H1 (cell line): ENCODE measurements at regions of chr16 and their contacts with region 1.

Region 1: DNA sequence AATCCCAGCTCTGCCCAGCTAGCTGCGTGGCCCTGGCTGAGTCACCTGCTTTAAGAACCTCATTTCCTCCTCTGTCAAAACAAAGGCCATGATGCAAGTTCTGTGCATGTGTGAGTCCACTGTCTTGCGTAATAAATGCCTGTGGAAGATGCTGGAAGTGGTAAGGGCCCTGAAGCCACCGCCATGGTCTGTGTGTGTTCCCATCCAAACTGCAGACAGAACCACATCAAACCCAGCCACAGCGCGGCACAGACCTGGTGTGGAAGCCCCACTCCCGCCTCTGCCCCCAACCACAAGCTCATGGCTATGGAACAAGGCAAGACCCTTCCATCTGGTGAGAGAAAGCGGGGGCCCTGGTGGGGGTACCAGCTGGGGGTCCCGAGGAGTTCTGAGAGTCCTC is 26.0 kb downstream of the NECAB2 start:
- DNase-seq: no peak
- H3K4me3 ChIP-seq: no peak overlapping the region
- H3K27ac ChIP-seq: no peak overlapping the region
- H3K4me1 ChIP-seq: peaks cover 2 to 12% (median 7%) of the 10 kb centered on the region in 4 experiments; a peak in 5 of 7 replicates
- H3K27me3 ChIP-seq: no peaks in the 10 kb centered on the region
- CTCF ChIP-seq: no peak
- EP300 ChIP-seq: no peak
- POLR2A ChIP-seq: no peak
- RAD21 ChIP-seq: no peak

Region 2: GRCh38 chr16:83980794-83981193 is 13.3 kb before region 1 on chr16:
- CTCF ChIA-PET with region 1: interaction called, 42 read pairs
- POLR2A ChIA-PET with region 1: interaction called, 3 read pairs
- DNase-seq: no peak
- H3K4me3 ChIP-seq: no peak overlapping the region
- H3K27ac ChIP-seq: no peak overlapping the region
- H3K4me1 ChIP-seq: no peaks in the 10 kb centered on the region
- H3K27me3 ChIP-seq: no peaks in the 10 kb centered on the region
- CTCF ChIP-seq: no peak
- EP300 ChIP-seq: no peak
- POLR2A ChIP-seq: no peak
- RAD21 ChIP-seq: no peak

Region 3: GRCh38 chr16:84013787-84014569 is 19.9 kb after region 1 on chr16:
- CTCF ChIA-PET with region 1: interaction called, 12 read pairs
- POLR2A ChIA-PET with region 1: interaction called, 4 read pairs
- DNase-seq: peak; percentile 99 to 100
- H3K4me3 ChIP-seq: no peak overlapping the region
- H3K27ac ChIP-seq: no peak overlapping the region
- H3K4me1 ChIP-seq: no peaks in the 10 kb centered on the region; a peak in 1 of 7 replicates
- H3K27me3 ChIP-seq: no peaks in the 10 kb centered on the region
- CTCF ChIP-seq: no peak
- EP300 ChIP-seq: no peak
- POLR2A ChIP-seq: 0 out of 3 replicates have a peak, but pooled peaks of 1 of the 2 experiments have one; percentile 26
- RAD21 ChIP-seq: no peak

Region 4: GRCh38 chr16:84055366-84055765 is 61.3 kb after region 1 on chr16:
- CTCF ChIA-PET with region 1: interaction called, 10 read pairs
- POLR2A ChIA-PET with region 1: no interaction called
- DNase-seq: no peak
- H3K4me3 ChIP-seq: no peak overlapping the region
- H3K27ac ChIP-seq: no peak overlapping the region
- H3K4me1 ChIP-seq: no peaks in the 10 kb centered on the region
- H3K27me3 ChIP-seq: no peaks in the 10 kb centered on the region
- CTCF ChIP-seq: no peak
- EP300 ChIP-seq: no peak
- POLR2A ChIP-seq: no peak
- RAD21 ChIP-seq: no peak